Caco-2 (cell line): ENCODE measurements at regions of chr11 and their contacts with region 1.

Region 1: GRCh38 chr11:123006860-123007542 is 25.4 kb upstream of the BSX start:
- DNase-seq: no peak
- H3K4me3 ChIP-seq: no peak overlapping the region
- H3K4me3 Mint-ChIP-seq: no peak overlapping the region
- H3K27ac Mint-ChIP-seq: no peak overlapping the region
- H3K4me1 ChIP-seq: peaks cover 8% of the 10 kb centered on the region
- H3K4me1 Mint-ChIP-seq: peaks cover 7% of the 10 kb centered on the region
- H3K27me3 ChIP-seq: no peaks in the 10 kb centered on the region; the same call in 1 of the 2 replicates
- H3K27me3 Mint-ChIP-seq: peaks cover 3% of the 10 kb centered on the region
- CTCF ChIP-seq: peak in 1 of 2 experiments; percentile 10

Region 2: DNA sequence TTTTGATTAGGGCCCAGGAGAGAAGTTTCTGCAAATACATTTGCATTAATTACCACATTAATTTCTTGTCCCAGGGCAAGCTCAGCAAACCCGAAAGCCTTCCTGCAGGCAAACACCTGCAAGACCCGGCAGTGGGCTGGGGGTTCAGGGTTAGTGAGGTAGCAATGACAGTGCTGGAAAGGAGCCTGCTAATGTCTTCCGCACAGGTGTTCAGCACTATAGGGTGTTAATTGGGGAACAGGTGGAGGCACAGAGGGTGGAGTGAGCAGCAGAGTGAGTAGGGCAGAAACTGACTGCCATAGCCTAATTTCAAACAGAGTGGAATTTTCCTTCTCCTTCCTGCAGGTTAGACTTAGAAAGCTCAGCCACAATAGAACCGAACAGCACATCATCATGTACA is 402.4 kb before region 1 on chr11:
- CTCF ChIA-PET with region 1: no interaction called
- POLR2A ChIA-PET with region 1: interaction called, 11 read pairs
- intact Hi-C with region 1: no loop called
- DNase-seq: no peak
- H3K4me3 ChIP-seq: no peak overlapping the region
- H3K4me3 Mint-ChIP-seq: no peak overlapping the region
- H3K27ac Mint-ChIP-seq: no peak overlapping the region
- H3K4me1 ChIP-seq: peaks cover 8% of the 10 kb centered on the region; the same call in 1 of the 2 replicates
- H3K4me1 Mint-ChIP-seq: no peaks in the 10 kb centered on the region
- H3K27me3 ChIP-seq: no peaks in the 10 kb centered on the region; the same call in 1 of the 2 replicates
- H3K27me3 Mint-ChIP-seq: peaks cover 6% of the 10 kb centered on the region
- CTCF ChIP-seq: no peak